Colonic mucosa (tissue), 4 donors: ENCODE measurements at regions of chr1 and their contacts with region 1.

Region 1: GRCh38 chr1:72435025-72435424 is 152.7 kb upstream of the NEGR1 start:
- DNase-seq: no peak
- H3K4me3 ChIP-seq: no peak overlapping the region
- H3K27ac ChIP-seq: no peak overlapping the region
- H3K4me1 ChIP-seq: no peaks in the 10 kb centered on the region
- H3K27me3 ChIP-seq: no peaks in the 10 kb centered on the region
- CTCF ChIP-seq: no peak

Region 2: GRCh38 chr1:72371259-72372035 is 63.6 kb before region 1 on chr1:
- intact Hi-C with region 1: no loop called
- DNase-seq: no peak
- H3K4me3 ChIP-seq: no peak overlapping the region
- H3K27ac ChIP-seq: no peak overlapping the region
- H3K4me1 ChIP-seq: no peaks in the 10 kb centered on the region
- H3K27me3 ChIP-seq: no peaks in the 10 kb centered on the region
- CTCF ChIP-seq: no peak

Region 3: DNA sequence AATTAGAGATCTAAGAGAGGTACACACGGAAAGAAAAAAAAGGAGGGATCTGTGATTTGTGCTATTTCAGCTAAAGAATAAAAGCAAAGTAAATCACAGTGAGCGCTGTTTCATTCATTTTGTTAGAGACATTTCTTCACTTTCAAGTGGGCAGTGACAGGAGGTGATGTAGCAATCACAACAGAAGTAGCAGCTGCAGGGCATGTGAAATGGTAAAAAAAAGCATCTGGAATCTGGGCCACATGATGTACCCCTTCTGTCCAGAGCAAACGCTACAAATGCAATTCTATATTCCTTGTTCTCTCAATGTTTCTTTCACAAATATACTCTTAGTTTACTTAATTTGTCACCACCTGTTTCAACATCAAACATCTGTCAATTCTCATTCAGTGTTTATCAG is 976.5 kb after region 1 on chr1:
- intact Hi-C with region 1: loop called (anchors 10 kb)
- DNase-seq: no peak
- H3K4me3 ChIP-seq: no peak overlapping the region
- H3K27ac ChIP-seq: no peak overlapping the region
- H3K4me1 ChIP-seq: no peaks in the 10 kb centered on the region
- H3K27me3 ChIP-seq: no peaks in the 10 kb centered on the region
- CTCF ChIP-seq: no peak